Mammary epithelial cell (primary cell): ENCODE measurements at regions of chr6 and their contacts with region 1.

Region 1: GRCh38 chr6:134640975-134641429 is 308.9 kb downstream of the ALDH8A1 start:
- DNase-seq: peak; percentile 94
- H3K4me3 ChIP-seq: no peak overlapping the region
- H3K27ac ChIP-seq: peak overlapping the region; percentile 65
- H3K4me1 ChIP-seq: peaks cover 19% of the 10 kb centered on the region
- H3K27me3 ChIP-seq: no peaks in the 10 kb centered on the region
- CTCF ChIP-seq: peak; percentile 94 to 99

Region 2: DNA sequence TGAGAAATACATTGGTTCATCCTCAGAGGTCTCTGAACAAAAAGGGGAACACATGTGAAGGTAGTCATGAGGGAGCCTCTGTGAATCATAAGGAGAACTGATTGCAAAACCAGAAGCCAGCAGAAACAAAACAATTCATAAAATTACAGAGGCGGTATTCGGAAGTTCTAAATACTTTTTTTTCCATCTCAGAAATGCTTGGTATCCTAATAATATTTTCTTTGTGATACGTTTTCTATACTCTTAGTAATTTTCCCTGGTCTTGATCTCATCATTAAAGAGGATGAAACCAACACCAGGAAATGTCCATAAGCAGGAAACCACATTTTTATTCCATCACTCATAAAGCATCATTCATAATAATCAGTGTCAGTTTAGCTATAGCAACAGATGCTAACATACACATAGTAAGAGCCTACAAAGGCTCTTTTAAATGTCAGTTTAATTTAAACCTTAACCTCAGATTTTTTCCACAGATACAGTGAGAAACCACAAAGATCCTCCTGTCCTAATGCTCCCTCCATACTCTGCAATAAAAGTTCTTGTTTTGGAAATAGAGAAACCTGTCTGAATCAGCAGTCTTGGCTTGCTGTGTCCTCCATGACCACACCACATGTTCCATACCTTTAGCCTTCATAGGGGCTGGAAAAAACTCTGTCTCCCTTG is 352.3 kb before region 1 on chr6:
- CTCF ChIA-PET with region 1: no interaction called
- dilution Hi-C with region 1: no loop called
- in situ Hi-C with region 1: no loop called
- intact Hi-C with region 1: loop called (anchors 1 kb)
- DNase-seq: peak; percentile 97
- H3K4me3 ChIP-seq: peak overlapping the region in 1 of 3 experiments; percentile 4
- H3K27ac ChIP-seq: peak overlapping the region; percentile 100
- H3K4me1 ChIP-seq: peaks cover 19% of the 10 kb centered on the region
- H3K27me3 ChIP-seq: no peaks in the 10 kb centered on the region
- CTCF ChIP-seq: no peak

Region 3: DNA sequence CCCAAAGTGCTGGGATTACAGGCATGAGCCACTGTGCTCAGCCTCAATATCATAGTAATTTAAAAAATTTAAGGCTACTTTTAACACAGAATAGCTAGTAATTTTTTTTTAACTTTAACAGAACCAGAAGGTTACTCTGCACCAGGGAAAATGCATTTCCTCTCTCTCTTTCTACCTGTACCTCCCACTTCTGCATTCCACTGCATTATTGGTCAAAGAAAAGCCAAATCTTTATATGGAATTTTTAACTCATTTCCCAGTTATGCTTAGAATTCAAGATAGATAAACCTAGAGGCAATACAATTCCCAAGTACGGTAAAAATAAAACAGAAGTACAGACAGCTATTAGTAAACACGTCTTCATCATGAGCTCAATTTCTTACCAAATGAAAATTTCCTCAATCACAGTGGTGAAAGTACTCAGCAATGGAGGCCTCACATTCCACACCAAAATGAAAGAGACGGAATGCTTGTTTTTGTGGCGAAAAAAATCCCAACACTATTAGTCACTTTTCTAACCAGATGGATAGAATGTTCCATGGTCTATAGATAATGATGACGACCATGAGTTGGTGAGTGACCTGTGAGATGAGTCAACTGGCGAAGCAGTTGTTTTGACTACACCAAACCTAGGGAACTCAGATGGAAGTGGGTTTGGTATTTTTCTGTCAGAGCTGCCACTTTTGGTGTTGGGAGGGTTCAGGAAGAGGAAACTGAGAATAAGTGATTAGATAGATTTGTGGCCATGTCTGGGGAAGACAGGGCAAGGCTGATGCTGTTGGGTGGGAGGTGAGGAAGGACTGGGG is 218.4 kb before region 1 on chr6:
- CTCF ChIA-PET with region 1: interaction called, 3 read pairs
- dilution Hi-C with region 1: no loop called
- in situ Hi-C with region 1: no loop called
- intact Hi-C with region 1: loop called (anchors 2 kb)
- DNase-seq: peak; percentile 98
- H3K4me3 ChIP-seq: no peak overlapping the region
- H3K27ac ChIP-seq: peak overlapping the region; percentile 95
- H3K4me1 ChIP-seq: peaks cover 48% of the 10 kb centered on the region
- H3K27me3 ChIP-seq: no peaks in the 10 kb centered on the region
- CTCF ChIP-seq: no peak

Region 4: DNA sequence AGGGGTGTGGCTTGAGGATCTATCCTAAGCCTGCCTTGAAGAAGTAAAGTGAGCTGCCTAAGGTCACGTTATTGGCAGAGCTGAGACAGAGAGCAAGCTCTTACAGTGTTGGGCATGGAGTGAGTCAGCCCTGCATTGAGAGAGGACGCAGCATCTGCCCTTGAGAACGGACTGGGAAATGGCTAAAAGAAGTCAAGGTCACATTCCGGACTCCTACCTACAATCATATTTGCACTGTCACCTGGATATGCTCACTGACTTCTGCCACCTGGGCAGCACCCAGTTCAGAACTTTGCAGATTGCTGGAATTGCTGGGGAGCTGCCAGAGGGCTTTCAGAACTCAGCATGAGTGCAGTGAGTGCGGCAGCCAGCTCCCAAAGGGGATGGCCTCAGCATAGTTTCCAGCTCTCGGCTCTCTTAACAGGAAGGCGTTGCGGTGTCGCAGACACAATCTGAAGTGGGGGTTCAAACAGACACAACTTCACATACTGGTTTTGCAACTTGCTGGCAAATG is 123.8 kb before region 1 on chr6:
- CTCF ChIA-PET with region 1: interaction called, 4 read pairs
- dilution Hi-C with region 1: loop called (anchors 5 kb)
- in situ Hi-C with region 1: no loop called
- intact Hi-C with region 1: loop called (anchors 5 kb)
- DNase-seq: peak; percentile 78
- H3K4me3 ChIP-seq: no peak overlapping the region
- H3K27ac ChIP-seq: peak overlapping the region; percentile 18
- H3K4me1 ChIP-seq: peaks cover 35% of the 10 kb centered on the region
- H3K27me3 ChIP-seq: no peaks in the 10 kb centered on the region
- CTCF ChIP-seq: no peak

Region 5: GRCh38 chr6:134589512-134589911 is 51.5 kb before region 1 on chr6:
- CTCF ChIA-PET with region 1: no interaction called
- dilution Hi-C with region 1: no loop called
- in situ Hi-C with region 1: no loop called
- intact Hi-C with region 1: loop called (anchors 1 kb)
- DNase-seq: peak; percentile 96
- H3K4me3 ChIP-seq: no peak overlapping the region
- H3K27ac ChIP-seq: peak overlapping the region; percentile 84
- H3K4me1 ChIP-seq: peaks cover 24% of the 10 kb centered on the region
- H3K27me3 ChIP-seq: no peaks in the 10 kb centered on the region
- CTCF ChIP-seq: no peak

Region 6: DNA sequence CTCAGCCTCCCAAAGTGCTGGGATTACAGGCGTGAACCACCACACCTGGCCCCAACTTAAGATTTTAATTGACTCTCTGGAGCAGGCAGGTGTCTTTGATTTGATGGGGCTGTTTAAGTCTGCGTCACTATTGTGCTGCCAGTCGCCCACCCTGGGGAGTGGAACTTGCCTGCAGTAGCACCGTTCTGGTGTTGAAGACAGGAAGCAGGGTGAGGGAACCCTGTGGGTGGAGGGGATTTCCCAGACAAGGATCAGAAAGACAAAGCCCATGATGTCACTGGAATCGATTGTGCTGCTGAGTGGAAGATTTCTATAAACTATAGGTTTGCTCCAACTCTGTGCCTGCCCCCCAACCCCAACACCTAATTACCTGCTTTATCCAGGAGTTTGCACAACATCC is 297.9 kb after region 1 on chr6:
- CTCF ChIA-PET with region 1: no interaction called
- dilution Hi-C with region 1: no loop called
- in situ Hi-C with region 1: no loop called
- intact Hi-C with region 1: loop called (anchors 2 kb)
- DNase-seq: no peak
- H3K4me3 ChIP-seq: no peak overlapping the region
- H3K27ac ChIP-seq: no peak overlapping the region
- H3K4me1 ChIP-seq: peaks cover 13% of the 10 kb centered on the region
- H3K27me3 ChIP-seq: no peaks in the 10 kb centered on the region
- CTCF ChIP-seq: no peak